MCF 10A (cell line): ENCODE measurements at regions of chr5 and their contacts with region 1.

Region 1: DNA sequence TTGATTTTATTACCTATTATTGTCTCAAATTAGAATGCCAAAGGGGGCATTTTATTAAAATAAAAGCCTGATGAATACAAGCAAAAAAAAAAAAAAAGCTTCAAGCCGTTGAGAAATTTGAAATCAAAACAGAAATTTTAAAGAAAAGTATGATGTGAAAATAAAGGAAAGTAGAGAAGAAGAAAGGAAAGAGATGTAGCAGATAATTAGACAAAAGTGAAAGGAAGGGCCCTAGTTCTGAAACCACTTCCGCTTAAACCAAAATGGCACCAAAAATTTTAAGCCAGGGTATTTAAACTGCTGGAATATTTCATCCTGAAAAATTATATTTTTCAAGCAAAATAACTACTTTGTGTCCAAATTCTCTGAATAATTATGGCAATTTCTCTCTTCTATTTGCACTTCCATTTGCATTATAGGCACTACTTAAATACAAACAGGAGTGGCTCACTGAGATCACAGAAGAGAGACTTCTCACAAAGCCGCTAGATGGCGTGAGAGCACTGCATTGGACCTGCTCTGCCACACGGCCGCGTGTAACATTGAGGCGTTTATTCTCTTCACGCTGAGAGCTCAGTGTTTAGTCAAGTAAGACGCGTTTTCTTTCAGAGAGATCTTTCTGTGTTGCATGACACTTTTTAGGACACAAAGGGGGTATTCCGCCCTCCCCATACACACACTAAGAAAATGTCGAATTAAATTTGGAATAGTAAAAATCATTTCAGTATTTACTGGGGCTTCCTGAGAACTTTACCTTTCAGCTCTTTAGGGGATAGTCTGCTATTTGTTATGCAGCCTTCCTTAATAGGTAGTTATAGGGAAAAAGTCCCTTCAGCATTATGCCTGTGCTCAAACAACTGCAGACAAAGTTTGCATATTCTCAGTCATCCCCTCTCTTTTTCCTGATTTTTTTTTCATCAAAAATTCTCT is 368.4 kb upstream of the CCNH start:
- DNase-seq: peak; percentile 86
- H3K4me3 Mint-ChIP-seq: no peak overlapping the region
- H3K27ac Mint-ChIP-seq: no peak overlapping the region
- H3K4me1 Mint-ChIP-seq: no peaks in the 10 kb centered on the region
- H3K27me3 Mint-ChIP-seq: peaks cover 73% of the 10 kb centered on the region
- CTCF ChIP-seq: peak; percentile 90

Region 2: GRCh38 chr5:87421307-87421706 is 359.8 kb before region 1 on chr5:
- CTCF ChIA-PET with region 1: interaction called, 3 read pairs
- POLR2A ChIA-PET with region 1: no interaction called
- intact Hi-C with region 1: loop called (anchors 5 kb)
- DNase-seq: peak; percentile 54
- H3K4me3 Mint-ChIP-seq: no peak overlapping the region
- H3K27ac Mint-ChIP-seq: no peak overlapping the region
- H3K4me1 Mint-ChIP-seq: peaks cover 12% of the 10 kb centered on the region
- H3K27me3 Mint-ChIP-seq: no peaks in the 10 kb centered on the region
- CTCF ChIP-seq: no peak

Region 3: DNA sequence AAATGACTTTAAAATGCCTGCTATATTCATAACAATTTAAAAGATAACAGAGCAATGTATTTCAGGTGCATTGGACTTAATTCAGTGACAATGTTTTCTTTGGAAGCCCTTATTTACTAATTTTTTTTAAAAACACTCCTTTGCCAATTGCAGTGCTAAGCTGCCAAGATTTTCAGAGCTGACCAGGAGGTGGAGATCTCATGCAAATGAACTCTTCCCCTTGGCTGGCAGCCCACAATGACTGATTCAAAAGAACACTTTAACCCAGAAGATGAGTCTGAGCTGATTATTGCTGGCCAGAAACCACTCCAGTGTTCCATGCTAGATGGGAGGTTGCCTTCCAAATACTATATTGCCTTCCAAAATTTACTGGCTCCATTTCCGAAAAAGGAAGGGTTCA is 240.1 kb before region 1 on chr5:
- CTCF ChIA-PET with region 1: no interaction called
- POLR2A ChIA-PET with region 1: no interaction called
- intact Hi-C with region 1: loop called (anchors 5 kb)
- DNase-seq: peak; percentile 79
- H3K4me3 Mint-ChIP-seq: no peak overlapping the region
- H3K27ac Mint-ChIP-seq: no peak overlapping the region
- H3K4me1 Mint-ChIP-seq: no peaks in the 10 kb centered on the region
- H3K27me3 Mint-ChIP-seq: peaks cover 63% of the 10 kb centered on the region
- CTCF ChIP-seq: no peak

Region 4: DNA sequence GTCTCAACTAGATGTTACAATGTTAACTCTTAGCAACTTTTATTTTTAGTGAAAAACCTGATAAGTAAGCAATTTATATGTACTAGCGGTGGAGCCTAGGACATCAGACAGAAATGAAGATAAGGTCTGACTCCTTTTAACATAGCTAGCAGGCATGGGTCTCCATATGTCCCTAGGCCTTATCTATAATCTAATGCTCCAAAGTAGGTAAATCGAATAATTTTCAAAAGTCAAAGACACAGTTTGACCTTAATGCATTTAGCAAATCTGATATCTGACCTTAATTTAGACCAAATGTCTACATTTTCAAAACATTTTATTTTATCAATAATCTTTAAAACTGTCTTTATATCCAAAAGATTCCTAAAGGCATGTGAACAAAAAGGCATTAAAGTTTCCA is 63.3 kb before region 1 on chr5:
- CTCF ChIA-PET with region 1: no interaction called
- POLR2A ChIA-PET with region 1: no interaction called
- intact Hi-C with region 1: no loop called
- DNase-seq: no peak
- H3K4me3 Mint-ChIP-seq: no peak overlapping the region
- H3K27ac Mint-ChIP-seq: no peak overlapping the region
- H3K4me1 Mint-ChIP-seq: no peaks in the 10 kb centered on the region
- H3K27me3 Mint-ChIP-seq: peaks cover 24% of the 10 kb centered on the region
- CTCF ChIP-seq: no peak

Region 5: DNA sequence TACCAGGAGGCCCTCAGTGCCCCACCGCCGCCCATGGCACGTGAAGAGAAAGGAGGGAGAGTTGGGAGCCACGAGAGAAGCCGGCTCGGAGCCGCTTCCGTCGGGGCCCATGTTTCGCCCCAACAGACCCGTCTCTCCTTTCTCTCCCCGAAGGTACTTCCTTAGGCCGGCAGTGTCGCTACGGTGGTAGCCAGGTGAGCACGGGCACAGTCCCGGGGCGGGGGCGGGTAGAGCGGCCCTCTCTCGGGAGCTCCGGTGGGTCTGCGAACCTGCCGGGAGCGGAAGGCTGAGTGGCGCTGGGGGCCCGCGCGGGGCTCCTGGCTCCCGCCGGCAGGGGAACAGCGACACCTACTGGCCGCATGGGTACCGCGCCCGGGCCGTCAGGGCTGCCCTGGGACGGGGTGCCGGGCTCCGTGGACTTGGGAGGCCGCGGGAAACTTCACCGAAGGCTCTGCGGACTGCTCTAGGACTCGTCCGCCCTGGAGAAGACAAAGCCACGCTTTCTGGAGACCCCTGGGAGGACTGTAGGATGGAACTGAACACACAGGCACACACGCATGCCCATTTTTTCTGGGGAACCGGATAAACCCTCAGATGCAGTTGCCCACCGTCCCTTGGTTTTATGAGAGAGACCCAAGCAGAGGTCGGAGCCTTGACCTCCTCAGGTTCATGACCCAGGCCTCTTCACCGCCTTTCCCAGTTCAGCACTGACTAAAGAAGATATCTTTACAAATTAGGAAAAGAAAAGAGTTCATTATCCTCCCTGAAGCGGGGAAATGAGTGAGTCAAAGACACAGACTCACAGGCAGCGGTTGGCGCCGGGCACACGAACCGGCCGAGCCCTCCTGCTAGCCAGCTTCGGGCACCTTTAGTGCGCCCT is 899.4 kb after region 1 on chr5:
- CTCF ChIA-PET with region 1: interaction called, 27 read pairs
- POLR2A ChIA-PET with region 1: no interaction called
- intact Hi-C with region 1: loop called (anchors 1 kb)
- DNase-seq: peak; percentile 51
- H3K4me3 Mint-ChIP-seq: peak overlapping the region; percentile 45
- H3K27ac Mint-ChIP-seq: no peak overlapping the region
- H3K4me1 Mint-ChIP-seq: no peaks in the 10 kb centered on the region
- H3K27me3 Mint-ChIP-seq: peaks cover 77% of the 10 kb centered on the region
- CTCF ChIP-seq: peak; percentile 95

Region 6: DNA sequence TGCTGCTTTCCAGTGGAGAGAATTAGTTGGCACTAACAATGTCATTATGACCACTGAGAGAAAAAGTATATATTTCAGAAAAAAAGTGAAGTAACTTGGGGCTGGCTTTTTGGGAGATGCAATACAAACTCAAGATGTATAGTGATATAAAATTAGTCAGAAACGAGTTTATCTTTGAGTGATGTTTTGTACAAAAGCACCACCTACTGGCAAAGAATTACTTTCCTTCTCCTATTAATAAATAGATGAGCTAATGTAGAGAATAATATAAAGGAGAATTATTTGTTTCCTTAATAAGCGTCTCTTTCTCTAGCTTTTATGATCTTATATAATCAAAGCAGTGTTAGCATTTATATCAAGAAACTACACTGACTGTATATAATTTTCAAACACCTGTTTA is 943.1 kb after region 1 on chr5:
- CTCF ChIA-PET with region 1: interaction called, 23 read pairs
- POLR2A ChIA-PET with region 1: no interaction called
- intact Hi-C with region 1: loop called (anchors 1 kb)
- DNase-seq: peak; percentile 8
- H3K4me3 Mint-ChIP-seq: no peak overlapping the region
- H3K27ac Mint-ChIP-seq: no peak overlapping the region
- H3K4me1 Mint-ChIP-seq: no peaks in the 10 kb centered on the region
- H3K27me3 Mint-ChIP-seq: peaks cover 62% of the 10 kb centered on the region
- CTCF ChIP-seq: peak; percentile 40